ENCODE measurements at regions of chr10 and their contacts with region 1.

Region 1: DNA sequence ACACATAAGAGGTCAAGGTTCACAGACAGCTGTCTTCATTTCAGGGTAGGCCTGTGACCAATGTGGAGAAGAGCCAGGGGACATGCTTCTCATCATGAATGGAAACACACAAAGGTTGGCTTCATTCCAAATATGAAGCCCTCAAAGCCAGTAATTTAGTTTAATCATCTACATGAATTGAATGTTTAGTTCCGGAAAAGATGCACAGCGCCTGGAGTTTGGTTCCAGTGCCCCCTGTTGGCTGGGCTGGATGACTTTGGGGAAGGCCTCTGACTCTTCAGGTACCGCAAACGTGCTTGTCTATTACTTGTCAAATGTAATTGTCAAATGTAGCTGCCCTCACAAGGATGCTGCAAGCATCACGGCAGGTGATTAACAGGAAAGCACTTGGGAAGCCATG is 130.7 kb downstream of the ADRA2A start:
- DNase-seq: peak in 6 of 14 experiments; percentile 2 to 33 (median 17)
- ATAC-seq: no peak
- H3K4me3 ChIP-seq: no peak overlapping the region
- H3K4me3 Mint-ChIP-seq: no peak overlapping the region
- H3K27ac ChIP-seq: no peak overlapping the region
- H3K27ac Mint-ChIP-seq: no peak overlapping the region
- H3K4me1 ChIP-seq: no peaks in the 10 kb centered on the region
- H3K4me1 Mint-ChIP-seq: no peaks in the 10 kb centered on the region
- H3K27me3 ChIP-seq: peaks cover 2 to 4% of the 10 kb centered on the region in 2 experiments
- H3K27me3 Mint-ChIP-seq: no peaks in the 10 kb centered on the region
- CTCF ChIP-seq: no peak

Region 2: DNA sequence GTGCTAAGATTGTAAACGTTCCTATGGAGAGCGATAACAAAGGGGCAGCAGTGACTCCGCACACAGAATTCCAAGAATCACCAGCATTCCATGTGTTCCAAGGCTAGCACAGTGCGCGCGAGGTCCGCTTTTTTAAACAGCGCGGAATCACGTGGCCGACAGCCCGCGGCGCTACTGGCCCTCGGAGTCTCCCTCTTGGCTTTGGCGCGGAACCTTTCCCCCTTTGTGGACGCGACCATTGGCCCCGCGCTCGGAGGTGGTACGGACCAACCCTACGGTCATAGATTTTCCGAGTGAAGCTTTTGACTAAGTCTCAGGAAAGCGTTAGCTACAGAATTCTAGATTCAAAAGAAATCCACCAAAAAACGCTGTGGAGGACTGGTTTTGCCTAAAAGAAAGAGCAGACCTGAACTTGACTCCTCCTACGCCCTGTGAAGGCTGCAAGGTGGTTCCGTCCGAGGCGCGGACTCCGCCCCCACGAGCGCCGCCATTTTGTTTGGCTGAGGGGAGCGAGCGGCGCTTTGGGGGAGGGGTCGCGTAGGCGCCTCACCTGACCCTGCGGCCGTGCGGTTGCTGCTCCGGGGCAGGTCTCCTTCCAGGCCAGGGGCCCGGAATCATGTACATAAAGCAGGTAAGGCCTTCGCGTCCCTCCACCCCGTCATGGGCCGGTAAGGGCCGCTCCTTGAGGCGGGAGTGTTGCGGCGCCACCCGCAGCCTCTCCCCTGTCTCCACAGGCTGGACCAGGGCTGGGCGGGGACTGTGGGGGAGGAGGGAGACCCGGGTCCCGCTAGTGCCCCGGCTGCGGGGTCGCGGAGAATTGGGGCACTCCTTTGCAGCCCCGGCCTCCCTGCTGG is 640.1 kb before region 1 on chr10 and contains the start of gene SMC3:
- CTCF ChIA-PET with region 1: no interaction called
- POLR2A ChIA-PET with region 1: no interaction called
- intact Hi-C with region 1: no loop called
- DNase-seq: peak; percentile 82 to 96 (median 88)
- ATAC-seq: peak; percentile 86
- H3K4me3 ChIP-seq: peak within 1 kb of the TSS; percentile 96
- H3K4me3 Mint-ChIP-seq: peak within 1 kb of the TSS; percentile 98
- H3K27ac ChIP-seq: peak within 1 kb of the TSS; percentile 79 to 83
- H3K27ac Mint-ChIP-seq: peak within 1 kb of the TSS; percentile 97
- H3K4me1 ChIP-seq: peaks cover 24% of the 10 kb centered on the region
- H3K4me1 Mint-ChIP-seq: peaks cover 49% of the 10 kb centered on the region
- H3K27me3 ChIP-seq: no peaks in the 10 kb centered on the region
- H3K27me3 Mint-ChIP-seq: peaks cover 21% of the 10 kb centered on the region
- CTCF ChIP-seq: no peak
- total RNA-seq, gene SMC3: 46.8 to 48.0 TPM

Region 3: GRCh38 chr10:111151595-111152307 is 55.7 kb before region 1 on chr10:
- CTCF ChIA-PET with region 1: no interaction called
- POLR2A ChIA-PET with region 1: no interaction called
- intact Hi-C with region 1: no loop called
- DNase-seq: no peak
- ATAC-seq: no peak
- H3K4me3 ChIP-seq: no peak overlapping the region
- H3K4me3 Mint-ChIP-seq: no peak overlapping the region
- H3K27ac ChIP-seq: no peak overlapping the region
- H3K27ac Mint-ChIP-seq: no peak overlapping the region
- H3K4me1 ChIP-seq: no peaks in the 10 kb centered on the region
- H3K4me1 Mint-ChIP-seq: peaks cover 3% of the 10 kb centered on the region
- H3K27me3 ChIP-seq: peaks cover 5 to 8% of the 10 kb centered on the region in 2 experiments
- H3K27me3 Mint-ChIP-seq: peaks cover 30% of the 10 kb centered on the region
- CTCF ChIP-seq: no peak

Region 4: DNA sequence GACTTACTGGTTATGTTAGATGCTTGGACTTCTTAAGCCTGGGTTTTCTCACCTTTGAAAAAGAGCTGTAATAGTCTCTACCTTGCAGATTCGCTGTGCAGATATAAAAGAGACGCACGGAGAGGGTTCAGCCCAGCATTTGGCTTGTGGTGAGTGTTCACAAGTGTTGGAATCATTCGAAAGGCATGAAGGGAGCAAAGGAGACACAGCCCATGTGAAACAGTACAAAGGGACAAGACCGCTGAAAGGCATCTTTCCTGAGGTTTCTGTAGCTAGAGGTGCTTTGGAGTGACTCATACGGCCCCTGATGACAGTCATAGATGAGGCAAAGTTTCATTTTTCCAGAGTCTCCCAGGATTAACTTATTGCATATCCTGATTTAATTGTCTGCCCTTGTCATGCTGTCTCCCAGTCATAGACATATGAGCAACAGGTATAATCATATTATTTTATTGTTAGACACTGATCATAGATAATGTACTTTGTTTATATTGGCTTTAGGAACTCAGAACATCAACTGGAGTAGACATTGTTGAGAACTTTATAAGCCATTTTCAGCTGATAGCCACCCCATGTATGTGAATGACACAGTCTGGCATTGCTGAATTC is 40.4 kb after region 1 on chr10:
- CTCF ChIA-PET with region 1: no interaction called
- POLR2A ChIA-PET with region 1: no interaction called
- intact Hi-C with region 1: no loop called
- DNase-seq: no peak
- ATAC-seq: no peak
- H3K4me3 ChIP-seq: no peak overlapping the region
- H3K4me3 Mint-ChIP-seq: no peak overlapping the region
- H3K27ac ChIP-seq: no peak overlapping the region
- H3K27ac Mint-ChIP-seq: no peak overlapping the region
- H3K4me1 ChIP-seq: no peaks in the 10 kb centered on the region
- H3K4me1 Mint-ChIP-seq: no peaks in the 10 kb centered on the region
- H3K27me3 ChIP-seq: peaks cover 12 to 13% of the 10 kb centered on the region in 2 experiments
- H3K27me3 Mint-ChIP-seq: peaks cover 49% of the 10 kb centered on the region
- CTCF ChIP-seq: no peak

Region 5: DNA sequence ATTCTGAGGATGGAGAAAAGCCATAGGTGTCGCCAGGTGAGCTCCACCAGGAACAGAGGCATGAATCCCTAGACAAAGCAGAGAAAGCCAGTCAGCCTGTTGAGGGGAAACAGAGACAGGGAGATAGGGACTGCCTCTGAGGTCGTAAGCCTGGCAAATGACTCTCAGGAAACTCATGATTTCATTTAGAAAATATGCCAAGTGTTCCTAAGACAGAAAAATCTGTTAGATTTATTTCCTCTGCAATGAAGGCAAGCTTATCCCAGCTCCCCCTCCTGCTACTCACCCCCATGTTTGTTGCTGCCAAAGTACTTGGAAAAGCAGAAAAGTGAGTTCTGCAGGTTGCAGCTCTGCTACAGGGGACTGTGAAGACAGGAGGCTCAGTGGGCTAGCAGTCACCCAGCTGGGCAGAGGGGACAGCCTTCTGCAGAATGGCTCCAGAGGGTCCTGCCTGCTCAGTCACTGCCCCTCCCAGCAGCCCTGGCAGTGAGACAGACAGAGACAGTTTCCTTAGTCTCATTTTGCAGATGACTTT is 53.6 kb after region 1 on chr10:
- CTCF ChIA-PET with region 1: no interaction called
- POLR2A ChIA-PET with region 1: no interaction called
- intact Hi-C with region 1: loop called in 1 of 2 experiments (anchors 5 kb)
- DNase-seq: no peak
- ATAC-seq: no peak
- H3K4me3 ChIP-seq: no peak overlapping the region
- H3K4me3 Mint-ChIP-seq: no peak overlapping the region
- H3K27ac ChIP-seq: no peak overlapping the region
- H3K27ac Mint-ChIP-seq: no peak overlapping the region
- H3K4me1 ChIP-seq: no peaks in the 10 kb centered on the region
- H3K4me1 Mint-ChIP-seq: no peaks in the 10 kb centered on the region
- H3K27me3 ChIP-seq: peaks cover 0 to 4% of the 10 kb centered on the region in 2 experiments
- H3K27me3 Mint-ChIP-seq: peaks cover 43% of the 10 kb centered on the region
- CTCF ChIP-seq: no peak